Right cardiac atrium (tissue), 5 donors: ENCODE measurements at regions of chr5 and their contacts with region 1.

Region 1: DNA sequence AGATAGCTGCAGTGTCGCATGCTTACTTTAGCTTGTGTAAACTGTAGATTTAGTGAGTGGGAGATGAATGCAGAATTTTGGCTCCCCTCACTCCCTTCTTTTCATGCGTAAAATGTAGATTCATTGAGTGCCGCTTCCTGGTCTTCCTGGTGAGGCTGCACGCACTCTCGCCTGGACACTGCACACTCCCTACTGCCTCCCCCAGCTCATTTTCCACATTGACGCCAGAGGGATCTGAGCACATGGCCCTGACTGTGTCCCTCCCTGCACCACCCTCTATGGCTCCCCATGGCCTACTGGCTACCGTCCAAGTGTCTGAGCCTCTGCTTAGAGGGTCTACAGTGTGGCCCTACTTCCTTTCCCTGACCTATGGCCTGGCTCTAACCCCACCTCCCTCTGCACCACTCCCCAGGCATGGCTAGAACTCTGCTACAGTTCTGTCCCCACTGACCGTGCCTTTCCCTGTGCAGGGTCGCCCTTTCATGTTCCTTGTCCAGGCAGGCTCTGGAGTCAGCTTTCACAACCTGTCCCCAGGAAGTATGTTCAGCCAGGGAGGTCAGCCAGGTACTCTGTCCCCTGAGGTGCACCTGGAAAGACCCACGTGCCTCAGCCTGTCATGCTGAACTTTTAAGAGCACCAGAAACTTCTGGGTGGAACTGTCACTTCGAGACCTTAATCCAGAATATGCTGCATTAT is 160.6 kb downstream of the COL23A1 start:
- DNase-seq: no peak
- ATAC-seq: peak in 1 of 2 donors; percentile 61
- H3K4me3 ChIP-seq: no peak overlapping the region
- H3K27ac ChIP-seq: peak overlapping the region; percentile 59
- H3K4me1 ChIP-seq: peaks cover 6% of the 10 kb centered on the region
- H3K27me3 ChIP-seq: no peaks in the 10 kb centered on the region

Region 2: GRCh38 chr5:178359738-178360137 is 69.9 kb before region 1 on chr5:
- intact Hi-C with region 1: loop called in 1 of 4 experiments (anchors 2 kb)
- DNase-seq: no peak
- ATAC-seq: no peak
- H3K4me3 ChIP-seq: no peak overlapping the region
- H3K27ac ChIP-seq: no peak overlapping the region
- H3K4me1 ChIP-seq: no peaks in the 10 kb centered on the region
- H3K27me3 ChIP-seq: no peaks in the 10 kb centered on the region

Region 3: GRCh38 chr5:178564397-178564796 is 134.8 kb after region 1 on chr5:
- intact Hi-C with region 1: no loop called
- DNase-seq: no peak
- ATAC-seq: no peak
- H3K4me3 ChIP-seq: no peak overlapping the region
- H3K27ac ChIP-seq: no peak overlapping the region
- H3K4me1 ChIP-seq: no peaks in the 10 kb centered on the region
- H3K27me3 ChIP-seq: no peaks in the 10 kb centered on the region